H1 (cell line): ENCODE measurements at regions of chr1 and their contacts with region 1.

Region 1: DNA sequence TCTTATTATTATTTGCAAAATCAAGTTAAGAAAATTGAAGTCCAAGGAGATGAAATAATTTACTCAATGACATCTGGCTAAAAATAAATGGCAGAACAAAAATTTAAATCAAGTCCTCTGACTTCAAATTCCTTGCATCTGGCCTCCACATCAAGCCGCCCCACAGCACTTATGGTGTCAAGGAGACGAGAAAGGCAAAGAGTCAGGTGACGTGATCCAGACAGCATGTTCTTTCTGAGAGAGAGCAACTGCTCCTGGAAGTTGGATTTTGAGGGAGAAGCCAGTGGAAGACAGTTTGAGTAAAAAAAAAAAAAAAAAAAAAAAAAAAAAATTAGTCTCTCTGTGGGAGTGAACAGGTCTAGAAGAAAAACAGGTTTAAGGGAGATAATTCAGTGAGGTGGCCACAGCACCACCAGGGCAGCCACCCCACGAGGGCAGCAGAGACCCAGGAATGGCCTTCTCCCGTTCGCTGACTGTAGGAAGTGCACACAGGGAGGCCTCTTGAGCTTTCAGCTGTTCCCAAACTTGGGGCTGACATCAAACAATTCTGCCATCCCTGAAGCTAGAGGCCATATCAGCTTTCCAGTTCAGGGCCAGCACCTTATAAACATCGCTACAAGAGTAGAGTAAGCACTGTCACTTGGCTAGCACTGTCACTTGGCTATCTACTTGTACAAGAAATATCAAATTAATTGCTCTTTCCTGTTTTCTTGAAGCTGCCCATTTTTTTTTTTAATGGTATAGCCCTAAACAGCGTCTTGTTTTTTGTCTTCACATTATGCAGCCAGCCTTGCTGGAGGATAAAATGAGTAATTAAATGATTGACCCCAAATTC is 7.8 kb downstream of the C1orf162 start:
- DNase-seq: peak; percentile 43 to 75
- H3K4me3 ChIP-seq: no peak overlapping the region
- H3K27ac ChIP-seq: no peak overlapping the region
- H3K4me1 ChIP-seq: no peaks in the 10 kb centered on the region
- H3K27me3 ChIP-seq: no peaks in the 10 kb centered on the region
- CTCF ChIP-seq: peak; percentile 84 to 92 (median 84)
- EP300 ChIP-seq: no peak
- POLR2A ChIP-seq: no peak
- RAD21 ChIP-seq: peak; percentile 97

Region 2: GRCh38 chr1:111446967-111447892 is 34.4 kb before region 1 on chr1:
- CTCF ChIA-PET with region 1: no interaction called
- POLR2A ChIA-PET with region 1: no interaction called
- DNase-seq: no peak
- H3K4me3 ChIP-seq: peak overlapping the region in 3 of 4 experiments; percentile 99 to 100 (median 99); a peak in 3 of 8 replicates
- H3K27ac ChIP-seq: no peak overlapping the region
- H3K4me1 ChIP-seq: peaks cover 0 to 2% (median 1%) of the 10 kb centered on the region in 4 experiments; a peak in 3 of 7 replicates
- H3K27me3 ChIP-seq: no peaks in the 10 kb centered on the region
- CTCF ChIP-seq: no peak
- EP300 ChIP-seq: no peak
- POLR2A ChIP-seq: no peak
- RAD21 ChIP-seq: no peak

Region 3: GRCh38 chr1:111497592-111497991 is 16.0 kb after region 1 on chr1:
- CTCF ChIA-PET with region 1: interaction called, 16 read pairs
- POLR2A ChIA-PET with region 1: interaction called, 3 read pairs
- DNase-seq: no peak
- H3K4me3 ChIP-seq: no peak overlapping the region
- H3K27ac ChIP-seq: no peak overlapping the region
- H3K4me1 ChIP-seq: no peaks in the 10 kb centered on the region
- H3K27me3 ChIP-seq: no peaks in the 10 kb centered on the region
- CTCF ChIP-seq: no peak
- EP300 ChIP-seq: no peak
- POLR2A ChIP-seq: no peak
- RAD21 ChIP-seq: no peak

Region 4: GRCh38 chr1:111707906-111708305 is 226.3 kb after region 1 on chr1:
- CTCF ChIA-PET with region 1: interaction called, 12 read pairs
- POLR2A ChIA-PET with region 1: no interaction called
- DNase-seq: no peak
- H3K4me3 ChIP-seq: no peak overlapping the region
- H3K27ac ChIP-seq: no peak overlapping the region
- H3K4me1 ChIP-seq: no peaks in the 10 kb centered on the region
- H3K27me3 ChIP-seq: no peaks in the 10 kb centered on the region
- CTCF ChIP-seq: no peak
- EP300 ChIP-seq: no peak
- POLR2A ChIP-seq: no peak
- RAD21 ChIP-seq: no peak

Region 5: GRCh38 chr1:111719674-111720132 is 238.1 kb after region 1 on chr1:
- CTCF ChIA-PET with region 1: interaction called, 21 read pairs
- POLR2A ChIA-PET with region 1: no interaction called
- DNase-seq: no peak
- H3K4me3 ChIP-seq: no peak overlapping the region
- H3K27ac ChIP-seq: no peak overlapping the region
- H3K4me1 ChIP-seq: peaks cover 2 to 14% (median 10%) of the 10 kb centered on the region in 4 experiments; a peak in 5 of 7 replicates
- H3K27me3 ChIP-seq: no peaks in the 10 kb centered on the region; a peak in 1 of 7 replicates
- CTCF ChIP-seq: no peak
- EP300 ChIP-seq: no peak
- POLR2A ChIP-seq: no peak
- RAD21 ChIP-seq: no peak

Region 6: GRCh38 chr1:111755331-111756123 is 273.9 kb after region 1 on chr1 and contains the start of gene DDX20:
- CTCF ChIA-PET with region 1: interaction called, 18 read pairs
- POLR2A ChIA-PET with region 1: no interaction called
- DNase-seq: peak in 1 of 2 experiments; percentile 92
- H3K4me3 ChIP-seq: peak within 1 kb of the TSS; percentile 89 to 93 (median 91)
- H3K27ac ChIP-seq: peak within 1 kb of the TSS; percentile 86
- H3K4me1 ChIP-seq: peaks cover 0 to 3% (median 0%) of the 10 kb centered on the region in 4 experiments; a peak in 1 of 7 replicates
- H3K27me3 ChIP-seq: no peaks in the 10 kb centered on the region
- CTCF ChIP-seq: peak; percentile 67 to 84 (median 83)
- EP300 ChIP-seq: no peak
- POLR2A ChIP-seq: peak; percentile 78 to 91
- RAD21 ChIP-seq: peak; percentile 65 to 66
- total RNA-seq, gene DDX20: 24.7 and 25.4 TPM in 2 replicates